KBM-7 (cell line): ENCODE measurements at regions of chr7 and their contacts with region 1.

Region 1: DNA sequence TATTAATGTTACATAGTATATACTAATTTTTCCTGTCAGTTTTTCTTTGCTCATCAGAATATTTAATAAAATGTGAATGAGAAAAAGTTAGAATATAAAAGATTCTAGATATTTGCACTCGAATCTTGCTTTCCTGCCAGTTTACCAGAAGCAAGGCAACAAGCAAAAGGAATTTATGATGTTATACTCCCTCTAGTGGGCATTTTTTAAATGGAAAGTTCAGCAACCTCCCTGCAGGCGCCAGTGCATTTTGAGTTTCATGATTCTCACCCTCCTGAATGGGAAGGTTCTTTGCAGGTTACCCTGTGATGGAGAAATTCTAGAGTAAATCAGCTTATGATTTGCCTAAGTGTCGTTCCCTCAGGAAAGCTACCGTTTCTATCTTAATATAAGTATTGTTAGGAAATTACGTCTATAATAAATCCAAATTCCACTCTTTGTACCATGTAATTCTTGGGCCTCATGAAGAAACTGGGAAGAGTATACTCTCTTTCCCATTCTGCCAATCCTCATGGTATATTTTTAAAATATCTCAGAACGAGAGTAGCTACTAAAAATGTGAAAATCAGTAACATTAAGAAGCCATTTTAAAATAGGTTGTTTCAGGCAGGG is 350.0 kb downstream of the CRPPA start:
- DNase-seq: peak; percentile 84

Region 2: GRCh38 chr7:14717816-14718215 is 1353.5 kb before region 1 on chr7:
- in situ Hi-C with region 1: loop called (anchors 25 kb)
- DNase-seq: peak; percentile 21

Region 3: DNA sequence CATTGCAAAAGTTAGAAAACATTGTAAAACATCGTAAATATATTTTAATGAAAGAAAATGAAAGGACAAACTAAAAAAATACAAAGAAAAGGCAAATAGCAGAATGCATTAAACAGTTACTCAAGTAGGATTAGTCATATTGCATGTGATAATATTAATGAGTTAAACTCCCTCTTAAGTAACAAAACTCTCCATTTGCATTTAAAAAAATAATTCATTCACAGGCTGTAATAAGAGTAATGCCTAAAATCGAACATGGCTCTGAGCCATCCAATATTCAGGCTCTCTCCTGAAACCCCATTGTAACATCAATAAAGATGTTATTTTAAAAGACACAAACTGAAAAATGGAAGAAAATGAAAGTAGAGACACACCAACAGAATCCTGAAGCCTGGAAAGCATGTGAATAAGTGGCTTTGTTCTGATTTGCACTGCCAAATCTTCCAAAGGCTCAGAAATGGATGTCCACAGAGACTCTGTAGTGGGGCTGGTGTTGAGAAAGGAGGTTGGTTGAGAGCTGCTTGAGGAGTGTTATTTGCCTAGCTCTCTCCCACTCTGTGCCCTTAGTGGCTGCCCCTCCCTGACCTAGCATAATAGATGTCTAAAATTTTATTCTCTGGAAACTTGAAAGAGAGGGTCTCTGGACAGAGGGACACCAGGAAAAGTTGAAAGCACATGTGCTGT is 116.5 kb before region 1 on chr7:
- in situ Hi-C with region 1: no loop called
- DNase-seq: no peak